Heart right ventricle (tissue), 16 donors: ENCODE measurements at regions of chr1 and their contacts with region 1.

Region 1: GRCh38 chr1:156090822-156091188 is 8.5 kb upstream of the MEX3A start:
- DNase-seq: peak; percentile 82 to 87
- ATAC-seq: peak; percentile 75 to 90 (median 84)
- H3K4me3 ChIP-seq: no peak overlapping the region
- H3K27ac ChIP-seq: peak overlapping the region in 1 of 10 donors; percentile 69
- H3K4me1 ChIP-seq: peaks cover under 1 to 28% (median 11%) of the 10 kb centered on the region in 9 donors
- H3K27me3 ChIP-seq: no peaks in the 10 kb centered on the region
- CTCF ChIP-seq: peak; percentile 78 to 95 (median 89)

Region 2: GRCh38 chr1:156129706-156130581 is 39.1 kb after region 1 on chr1:
- intact Hi-C with region 1: loop called (anchors 1 to 5 kb)
- DNase-seq: peak; percentile 82 to 86
- ATAC-seq: peak; percentile 50 to 73 (median 58)
- H3K4me3 ChIP-seq: peak overlapping the region in 8 of 10 donors; percentile 6 to 33 (median 27)
- H3K27ac ChIP-seq: peak overlapping the region; percentile 92 to 100 (median 98)
- H3K4me1 ChIP-seq: peaks cover 47 to 86% (median 60%) of the 10 kb centered on the region in 9 donors
- H3K27me3 ChIP-seq: no peaks in the 10 kb centered on the region
- CTCF ChIP-seq: peak; percentile 93 to 100 (median 98)

Region 3: DNA sequence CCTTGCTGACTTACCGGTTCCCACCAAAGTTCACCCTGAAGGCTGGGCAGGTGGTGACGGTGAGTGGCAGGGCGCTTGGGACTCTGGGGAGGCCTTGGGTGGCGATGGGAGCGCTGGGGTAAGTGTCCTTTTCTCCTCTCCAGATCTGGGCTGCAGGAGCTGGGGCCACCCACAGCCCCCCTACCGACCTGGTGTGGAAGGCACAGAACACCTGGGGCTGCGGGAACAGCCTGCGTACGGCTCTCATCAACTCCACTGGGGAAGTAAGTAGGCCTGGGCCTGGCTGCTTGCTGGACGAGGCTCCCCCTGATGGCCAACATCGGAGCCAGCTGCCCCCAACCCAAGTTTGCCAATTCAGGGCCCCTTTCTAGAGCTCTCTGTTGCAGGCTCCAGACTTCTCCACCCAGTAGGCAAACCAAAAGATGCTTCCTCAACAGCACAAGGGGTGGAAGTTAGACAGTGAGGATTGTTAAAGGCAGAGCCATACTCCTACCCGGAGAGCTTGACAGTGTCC is 46.2 kb after region 1 on chr1:
- intact Hi-C with region 1: loop called in 2 of 10 experiments (anchors 5 kb)
- DNase-seq: no peak
- ATAC-seq: no peak
- H3K4me3 ChIP-seq: no peak overlapping the region
- H3K27ac ChIP-seq: no peak overlapping the region
- H3K4me1 ChIP-seq: peaks cover 0 to 46% (median 5%) of the 10 kb centered on the region in 9 donors
- H3K27me3 ChIP-seq: no peaks in the 10 kb centered on the region
- CTCF ChIP-seq: peak in 1 of 9 donors; percentile 13

Region 4: GRCh38 chr1:156198831-156199349 is 108.1 kb after region 1 on chr1:
- intact Hi-C with region 1: no loop called
- DNase-seq: no peak
- ATAC-seq: no peak
- H3K4me3 ChIP-seq: no peak overlapping the region
- H3K27ac ChIP-seq: peak overlapping the region in 1 of 10 donors; percentile 12
- H3K4me1 ChIP-seq: peaks cover 0 to 70% (median 56%) of the 10 kb centered on the region in 9 donors
- H3K27me3 ChIP-seq: no peaks in the 10 kb centered on the region
- CTCF ChIP-seq: no peak

Region 5: GRCh38 chr1:156226116-156226538 is 135.3 kb after region 1 on chr1:
- intact Hi-C with region 1: loop called (anchors 1 to 5 kb)
- DNase-seq: no peak
- ATAC-seq: no peak
- H3K4me3 ChIP-seq: no peak overlapping the region
- H3K27ac ChIP-seq: peak overlapping the region in 1 of 10 donors; percentile 3
- H3K4me1 ChIP-seq: peaks cover 0 to 9% (median 4%) of the 10 kb centered on the region in 9 donors
- H3K27me3 ChIP-seq: no peaks in the 10 kb centered on the region
- CTCF ChIP-seq: no peak